ENCODE measurements at regions of chr1 and their contacts with region 1.

Region 1: GRCh38 chr1:43946236-43947060 is at the start of gene IPO13:
- DNase-seq: peak; percentile 91 to 97 (median 94)
- ATAC-seq: peak; percentile 96
- H3K4me3 ChIP-seq: peak within 1 kb of the TSS; percentile 94
- H3K4me3 Mint-ChIP-seq: peak within 1 kb of the TSS; percentile 91
- H3K27ac ChIP-seq: peak within 1 kb of the TSS; percentile 93 to 94
- H3K27ac Mint-ChIP-seq: peak within 1 kb of the TSS; percentile 91
- H3K4me1 ChIP-seq: peaks cover 36% of the 10 kb centered on the region
- H3K4me1 Mint-ChIP-seq: peaks cover 63% of the 10 kb centered on the region
- H3K27me3 ChIP-seq: no peaks in the 10 kb centered on the region
- H3K27me3 Mint-ChIP-seq: no peaks in the 10 kb centered on the region
- CTCF ChIP-seq: peak; percentile 65
- total RNA-seq, gene IPO13: 6.3 to 7.4 TPM

Region 2: GRCh38 chr1:43367904-43368645 is 578.4 kb before region 1 on chr1 and contains the start of gene ELOVL1:
- CTCF ChIA-PET with region 1: no interaction called
- POLR2A ChIA-PET with region 1: no interaction called
- intact Hi-C with region 1: loop called in 1 of 2 experiments (anchors 10 kb)
- DNase-seq: peak; percentile 54 to 92 (median 84)
- ATAC-seq: peak; percentile 68
- H3K4me3 ChIP-seq: peak within 1 kb of the TSS; percentile 87
- H3K4me3 Mint-ChIP-seq: peak within 1 kb of the TSS; percentile 92
- H3K27ac ChIP-seq: peak within 1 kb of the TSS; percentile 63 to 79
- H3K27ac Mint-ChIP-seq: peak within 1 kb of the TSS; percentile 94
- H3K4me1 ChIP-seq: peaks cover 35% of the 10 kb centered on the region
- H3K4me1 Mint-ChIP-seq: peaks cover 45% of the 10 kb centered on the region
- H3K27me3 ChIP-seq: no peaks in the 10 kb centered on the region
- H3K27me3 Mint-ChIP-seq: no peaks in the 10 kb centered on the region
- CTCF ChIP-seq: no peak
- total RNA-seq, gene ELOVL1: 28.7 to 31.2 TPM

Region 3: GRCh38 chr1:43582162-43582589 is 364.3 kb before region 1 on chr1:
- CTCF ChIA-PET with region 1: no interaction called
- POLR2A ChIA-PET with region 1: no interaction called
- intact Hi-C with region 1: no loop called
- DNase-seq: no peak
- ATAC-seq: no peak
- H3K4me3 ChIP-seq: no peak overlapping the region
- H3K4me3 Mint-ChIP-seq: no peak overlapping the region
- H3K27ac ChIP-seq: no peak overlapping the region
- H3K27ac Mint-ChIP-seq: no peak overlapping the region
- H3K4me1 ChIP-seq: no peaks in the 10 kb centered on the region
- H3K4me1 Mint-ChIP-seq: no peaks in the 10 kb centered on the region
- H3K27me3 ChIP-seq: no peaks in the 10 kb centered on the region
- H3K27me3 Mint-ChIP-seq: no peaks in the 10 kb centered on the region
- CTCF ChIP-seq: no peak

Region 4: GRCh38 chr1:43650310-43651085 is 295.9 kb before region 1 on chr1:
- CTCF ChIA-PET with region 1: no interaction called
- POLR2A ChIA-PET with region 1: interaction called, 6 read pairs
- intact Hi-C with region 1: loop called in 1 of 2 experiments (anchors 2 kb)
- DNase-seq: peak in 13 of 14 experiments; percentile 78 to 96 (median 86)
- ATAC-seq: peak; percentile 71
- H3K4me3 ChIP-seq: peak overlapping the region; percentile 91
- H3K4me3 Mint-ChIP-seq: peak overlapping the region; percentile 98
- H3K27ac ChIP-seq: peak overlapping the region; percentile 75 to 79
- H3K27ac Mint-ChIP-seq: peak overlapping the region; percentile 90
- H3K4me1 ChIP-seq: peaks cover 32% of the 10 kb centered on the region
- H3K4me1 Mint-ChIP-seq: peaks cover 41% of the 10 kb centered on the region
- H3K27me3 ChIP-seq: no peaks in the 10 kb centered on the region
- H3K27me3 Mint-ChIP-seq: no peaks in the 10 kb centered on the region
- CTCF ChIP-seq: no peak

Region 5: GRCh38 chr1:43763497-43763973 is 182.9 kb before region 1 on chr1:
- CTCF ChIA-PET with region 1: no interaction called
- POLR2A ChIA-PET with region 1: interaction called, 4 read pairs
- intact Hi-C with region 1: loop called in 1 of 2 experiments (anchors 5 kb)
- DNase-seq: peak in 13 of 14 experiments; percentile 1 to 70 (median 17)
- ATAC-seq: peak; percentile 78
- H3K4me3 ChIP-seq: no peak overlapping the region
- H3K4me3 Mint-ChIP-seq: no peak overlapping the region
- H3K27ac ChIP-seq: no peak overlapping the region
- H3K27ac Mint-ChIP-seq: no peak overlapping the region
- H3K4me1 ChIP-seq: no peaks in the 10 kb centered on the region
- H3K4me1 Mint-ChIP-seq: peaks cover 6% of the 10 kb centered on the region
- H3K27me3 ChIP-seq: no peaks in the 10 kb centered on the region
- H3K27me3 Mint-ChIP-seq: no peaks in the 10 kb centered on the region
- CTCF ChIP-seq: peak; percentile 75

Region 6: GRCh38 chr1:43908863-43909262 is 37.6 kb before region 1 on chr1:
- CTCF ChIA-PET with region 1: no interaction called
- POLR2A ChIA-PET with region 1: no interaction called
- intact Hi-C with region 1: no loop called
- DNase-seq: no peak
- ATAC-seq: no peak
- H3K4me3 ChIP-seq: no peak overlapping the region
- H3K4me3 Mint-ChIP-seq: no peak overlapping the region
- H3K27ac ChIP-seq: no peak overlapping the region
- H3K27ac Mint-ChIP-seq: no peak overlapping the region
- H3K4me1 ChIP-seq: no peaks in the 10 kb centered on the region
- H3K4me1 Mint-ChIP-seq: no peaks in the 10 kb centered on the region
- H3K27me3 ChIP-seq: no peaks in the 10 kb centered on the region
- H3K27me3 Mint-ChIP-seq: no peaks in the 10 kb centered on the region
- CTCF ChIP-seq: no peak

Region 7: GRCh38 chr1:43968348-43968948 is 22.0 kb after region 1 on chr1:
- CTCF ChIA-PET with region 1: interaction called, 4 read pairs
- POLR2A ChIA-PET with region 1: interaction called, 7 read pairs
- intact Hi-C with region 1: loop called (anchors 1 kb)
- DNase-seq: peak in 4 of 14 experiments; percentile 18 to 56 (median 45)
- ATAC-seq: no peak
- H3K4me3 ChIP-seq: no peak overlapping the region
- H3K4me3 Mint-ChIP-seq: peak overlapping the region; percentile 20
- H3K27ac ChIP-seq: no peak overlapping the region
- H3K27ac Mint-ChIP-seq: no peak overlapping the region
- H3K4me1 ChIP-seq: peaks cover 24% of the 10 kb centered on the region
- H3K4me1 Mint-ChIP-seq: peaks cover 27% of the 10 kb centered on the region
- H3K27me3 ChIP-seq: no peaks in the 10 kb centered on the region
- H3K27me3 Mint-ChIP-seq: no peaks in the 10 kb centered on the region
- CTCF ChIP-seq: no peak

Region 8: GRCh38 chr1:43991476-43992231 is 45.2 kb after region 1 on chr1 and contains the start of gene CCDC24:
- CTCF ChIA-PET with region 1: no interaction called
- POLR2A ChIA-PET with region 1: no interaction called
- intact Hi-C with region 1: loop called in 1 of 2 experiments (anchors 1 kb)
- DNase-seq: peak; percentile 39 to 87 (median 67)
- ATAC-seq: peak; percentile 82
- H3K4me3 ChIP-seq: peak within 1 kb of the TSS; percentile 78
- H3K4me3 Mint-ChIP-seq: peak within 1 kb of the TSS; percentile 95
- H3K27ac ChIP-seq: no peak within 1 kb of the TSS
- H3K27ac Mint-ChIP-seq: peak within 1 kb of the TSS; percentile 62
- H3K4me1 ChIP-seq: peaks cover 19% of the 10 kb centered on the region
- H3K4me1 Mint-ChIP-seq: peaks cover 16% of the 10 kb centered on the region
- H3K27me3 ChIP-seq: no peaks in the 10 kb centered on the region
- H3K27me3 Mint-ChIP-seq: no peaks in the 10 kb centered on the region
- CTCF ChIP-seq: no peak
- total RNA-seq, gene CCDC24: 0.98 to 1.4 TPM

Region 9: GRCh38 chr1:44213222-44214112 is 267.0 kb after region 1 on chr1 and contains the start of gene DMAP1:
- CTCF ChIA-PET with region 1: no interaction called
- POLR2A ChIA-PET with region 1: no interaction called
- intact Hi-C with region 1: loop called in 1 of 2 experiments (anchors 5 kb)
- DNase-seq: peak; percentile 77 to 92 (median 82)
- ATAC-seq: peak; percentile 89
- H3K4me3 ChIP-seq: peak within 1 kb of the TSS; percentile 92
- H3K4me3 Mint-ChIP-seq: peak within 1 kb of the TSS; percentile 98
- H3K27ac ChIP-seq: peak within 1 kb of the TSS; percentile 64 to 75
- H3K27ac Mint-ChIP-seq: peak within 1 kb of the TSS; percentile 93
- H3K4me1 ChIP-seq: peaks cover 29% of the 10 kb centered on the region
- H3K4me1 Mint-ChIP-seq: peaks cover 47% of the 10 kb centered on the region
- H3K27me3 ChIP-seq: no peaks in the 10 kb centered on the region
- H3K27me3 Mint-ChIP-seq: no peaks in the 10 kb centered on the region
- CTCF ChIP-seq: no peak
- total RNA-seq, gene DMAP1: 53.4 to 56.9 TPM